Activated T-helper 1 cell treated with anti-CD3 and anti-CD28 coated beads, Interleukin-12 subunit alpha, Interleukin-12 subunit beta, Interleukin-2, Interleukin-4 antibody, amounts not matched to agents 30 ng/mL and 10 ng/mL and 1 ng/mL, durations not matched to agents 14 hours and 24 hours and 36 hours (primary cell): ENCODE measurements at regions of chr10 and their contacts with region 1.

Region 1: GRCh38 chr10:14191871-14192270 is 138.9 kb downstream of the FRMD4A start:
- DNase-seq: no peak
- H3K4me3 Mint-ChIP-seq: no peak overlapping the region
- H3K27ac Mint-ChIP-seq: no peak overlapping the region
- H3K4me1 Mint-ChIP-seq: no peaks in the 10 kb centered on the region
- H3K27me3 Mint-ChIP-seq: peaks cover 29% of the 10 kb centered on the region

Region 2: GRCh38 chr10:14382022-14382421 is 190.2 kb after region 1 on chr10:
- intact Hi-C with region 1: no loop called
- DNase-seq: peak; percentile 21
- H3K4me3 Mint-ChIP-seq: no peak overlapping the region
- H3K27ac Mint-ChIP-seq: no peak overlapping the region
- H3K4me1 Mint-ChIP-seq: peaks cover 29% of the 10 kb centered on the region
- H3K27me3 Mint-ChIP-seq: peaks cover 24% of the 10 kb centered on the region

Region 3: GRCh38 chr10:14543046-14543903 is 351.4 kb after region 1 on chr10:
- intact Hi-C with region 1: loop called (anchors 2 kb)
- DNase-seq: no peak
- H3K4me3 Mint-ChIP-seq: peak overlapping the region; percentile 8
- H3K27ac Mint-ChIP-seq: peak overlapping the region; percentile 58
- H3K4me1 Mint-ChIP-seq: peaks cover 84% of the 10 kb centered on the region
- H3K27me3 Mint-ChIP-seq: no peaks in the 10 kb centered on the region

Region 4: GRCh38 chr10:14971867-14972448 is 780.1 kb after region 1 on chr10:
- intact Hi-C with region 1: loop called (anchors 2 kb)
- DNase-seq: peak; percentile 36
- H3K4me3 Mint-ChIP-seq: no peak overlapping the region
- H3K27ac Mint-ChIP-seq: no peak overlapping the region
- H3K4me1 Mint-ChIP-seq: no peaks in the 10 kb centered on the region
- H3K27me3 Mint-ChIP-seq: peaks cover 5% of the 10 kb centered on the region